CD4-positive, alpha-beta T cell (primary cell): ENCODE measurements at regions of chr5 and their contacts with region 1.

Region 1: GRCh38 chr5:163564321-163564938 is 59.0 kb downstream of the MAT2B start:
- DNase-seq: peak; percentile 27 to 77 (median 54)
- ATAC-seq: peak; percentile 56
- H3K4me3 ChIP-seq: no peak overlapping the region
- H3K4me3 Mint-ChIP-seq: peak overlapping the region; percentile 39
- H3K27ac ChIP-seq: no peak overlapping the region
- H3K27ac Mint-ChIP-seq: no peak overlapping the region
- H3K4me1 ChIP-seq: peaks cover 18% of the 10 kb centered on the region
- H3K4me1 Mint-ChIP-seq: peaks cover 17% of the 10 kb centered on the region
- H3K27me3 ChIP-seq: peaks cover 27 to 49% of the 10 kb centered on the region in 2 experiments
- H3K27me3 Mint-ChIP-seq: peaks cover 68% of the 10 kb centered on the region
- CTCF ChIP-seq: peak; percentile 86

Region 2: DNA sequence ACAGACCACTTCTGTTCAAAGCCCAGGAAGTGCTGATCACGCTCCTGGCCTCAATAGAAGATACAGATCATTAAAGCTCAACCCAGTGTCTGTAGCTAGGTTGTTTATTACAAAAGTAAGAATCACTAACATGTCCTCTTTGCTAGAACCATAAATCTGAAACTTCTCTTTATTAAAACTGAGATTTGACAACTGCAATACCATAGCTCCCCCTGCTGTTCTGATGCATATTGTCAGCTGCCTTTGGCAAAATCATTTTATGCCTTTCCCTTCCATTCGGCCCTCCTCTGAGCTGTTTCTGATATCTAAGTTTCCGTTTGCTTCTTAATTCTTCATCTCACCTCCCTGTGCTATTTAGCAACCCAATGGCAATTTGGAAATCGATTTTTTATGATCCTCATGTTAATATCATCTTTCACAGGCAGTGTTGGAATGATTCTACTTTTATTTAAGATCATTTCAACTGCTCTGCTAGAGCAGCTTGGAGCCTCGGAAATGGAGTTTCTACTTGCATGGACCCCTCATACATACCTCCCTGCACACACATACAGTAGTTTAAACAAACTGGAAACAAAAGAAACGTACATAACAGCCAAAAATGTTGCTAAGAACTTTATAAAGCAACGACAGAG is 939.8 kb after region 1 on chr5:
- CTCF ChIA-PET with region 1: no interaction called
- POLR2A ChIA-PET with region 1: no interaction called
- intact Hi-C with region 1: loop called in 1 of 2 experiments (anchors 5 kb)
- DNase-seq: peak in 3 of 14 experiments; percentile 10 to 40 (median 29)
- ATAC-seq: no peak
- H3K4me3 ChIP-seq: no peak overlapping the region
- H3K4me3 Mint-ChIP-seq: no peak overlapping the region
- H3K27ac ChIP-seq: no peak overlapping the region
- H3K27ac Mint-ChIP-seq: no peak overlapping the region
- H3K4me1 ChIP-seq: no peaks in the 10 kb centered on the region
- H3K4me1 Mint-ChIP-seq: no peaks in the 10 kb centered on the region
- H3K27me3 ChIP-seq: no peaks in the 10 kb centered on the region
- H3K27me3 Mint-ChIP-seq: no peaks in the 10 kb centered on the region
- CTCF ChIP-seq: no peak

Region 3: GRCh38 chr5:165209086-165209727 is 1644.8 kb after region 1 on chr5:
- CTCF ChIA-PET with region 1: no interaction called
- POLR2A ChIA-PET with region 1: no interaction called
- intact Hi-C with region 1: loop called in 1 of 2 experiments (anchors 2 kb)
- DNase-seq: peak in 2 of 14 experiments; percentile 8 to 18
- ATAC-seq: no peak
- H3K4me3 ChIP-seq: no peak overlapping the region
- H3K4me3 Mint-ChIP-seq: no peak overlapping the region
- H3K27ac ChIP-seq: no peak overlapping the region
- H3K27ac Mint-ChIP-seq: no peak overlapping the region
- H3K4me1 ChIP-seq: no peaks in the 10 kb centered on the region
- H3K4me1 Mint-ChIP-seq: no peaks in the 10 kb centered on the region
- H3K27me3 ChIP-seq: no peaks in the 10 kb centered on the region
- H3K27me3 Mint-ChIP-seq: no peaks in the 10 kb centered on the region
- CTCF ChIP-seq: peak; percentile 28